Mammary epithelial cell (primary cell): ENCODE measurements at regions of chr2 and their contacts with region 1.

Region 1: GRCh38 chr2:120287183-120288015 is 34.7 kb downstream of the RALB start:
- DNase-seq: peak; percentile 87
- H3K4me3 ChIP-seq: no peak overlapping the region
- H3K27ac ChIP-seq: peak overlapping the region; percentile 19
- H3K4me1 ChIP-seq: peaks cover 30% of the 10 kb centered on the region
- H3K27me3 ChIP-seq: no peaks in the 10 kb centered on the region
- CTCF ChIP-seq: no peak

Region 2: GRCh38 chr2:120252225-120253021 is 35.0 kb before region 1 on chr2 and contains the start of gene RALB:
- CTCF ChIA-PET with region 1: no interaction called
- dilution Hi-C with region 1: no loop called
- in situ Hi-C with region 1: no loop called
- intact Hi-C with region 1: loop called (anchors 1 kb)
- DNase-seq: peak; percentile 98
- H3K4me3 ChIP-seq: peak within 1 kb of the TSS; percentile 67 to 79 (median 69)
- H3K27ac ChIP-seq: peak within 1 kb of the TSS; percentile 74
- H3K4me1 ChIP-seq: peaks cover 14% of the 10 kb centered on the region
- H3K27me3 ChIP-seq: no peaks in the 10 kb centered on the region
- CTCF ChIP-seq: no peak
- total RNA-seq, gene RALB: 34.0 to 49.8 TPM

Region 3: DNA sequence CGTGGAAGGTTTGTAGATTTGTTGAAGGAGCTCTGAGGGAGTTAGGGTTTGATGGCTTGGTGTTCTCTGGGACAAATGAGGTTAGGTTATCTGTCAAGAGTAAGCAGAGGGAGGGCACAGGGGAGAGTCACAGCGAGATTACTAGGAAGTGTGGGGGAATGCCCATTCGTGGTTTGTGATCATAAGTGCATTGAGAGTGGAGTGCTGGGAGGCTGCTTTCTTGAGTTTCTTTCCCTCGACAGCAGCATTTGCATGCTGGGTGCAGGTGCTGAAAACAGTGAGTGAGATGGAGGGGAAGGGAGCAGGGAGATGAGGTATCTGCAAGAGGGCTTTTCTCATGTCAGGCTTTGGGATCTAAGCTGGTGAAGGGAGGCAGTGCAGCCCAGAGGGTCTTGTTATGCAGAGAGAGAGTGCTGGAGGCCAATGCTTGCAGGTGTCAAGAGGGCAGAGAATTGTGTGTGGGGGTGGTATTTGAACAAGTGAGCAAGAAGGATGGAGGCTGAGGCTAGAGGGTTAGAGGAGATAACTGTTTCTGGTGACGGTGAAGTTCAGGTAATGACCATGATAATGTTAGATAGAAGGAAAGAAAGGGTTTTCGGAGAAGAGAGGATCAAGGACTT is 25.9 kb before region 1 on chr2:
- CTCF ChIA-PET with region 1: no interaction called
- dilution Hi-C with region 1: no loop called
- in situ Hi-C with region 1: no loop called
- intact Hi-C with region 1: loop called (anchors 2 kb)
- DNase-seq: no peak
- H3K4me3 ChIP-seq: no peak overlapping the region
- H3K27ac ChIP-seq: no peak overlapping the region
- H3K4me1 ChIP-seq: peaks cover 21% of the 10 kb centered on the region
- H3K27me3 ChIP-seq: no peaks in the 10 kb centered on the region
- CTCF ChIP-seq: no peak